Activated CD4-positive, alpha-beta T cell treated with anti-CD3 and anti-CD28 coated beads, Interleukin-2, amount 10 ng/mL, durations not matched to agents 24 days and 14 days (primary cell): ENCODE measurements at regions of chr2 and their contacts with region 1.

Region 1: DNA sequence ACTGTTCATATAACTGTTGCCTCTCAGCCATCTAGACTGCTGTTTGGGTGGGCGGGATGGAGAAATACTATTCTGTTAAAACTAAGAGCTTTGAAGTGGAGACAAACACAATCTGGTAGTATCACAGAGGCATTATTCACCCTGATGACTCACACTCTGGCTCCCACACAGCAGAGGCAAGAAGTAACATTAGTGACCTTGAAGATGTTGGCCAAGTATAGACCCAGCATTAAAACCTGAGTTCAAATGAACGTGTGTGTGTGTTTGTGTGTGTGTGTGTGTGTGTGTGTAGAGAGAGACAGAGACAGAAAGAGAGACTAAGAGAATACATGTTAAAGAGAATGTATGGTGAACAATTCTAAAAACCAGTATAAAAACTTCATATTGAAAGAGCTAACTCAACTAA is 22.5 kb upstream of the ACVR1 start:
- DNase-seq: peak; percentile 85
- H3K4me3 Mint-ChIP-seq: peak overlapping the region; percentile 82
- H3K27ac Mint-ChIP-seq: peak overlapping the region; percentile 99
- H3K4me1 Mint-ChIP-seq: peaks cover 75% of the 10 kb centered on the region
- H3K27me3 Mint-ChIP-seq: no peaks in the 10 kb centered on the region

Region 2: DNA sequence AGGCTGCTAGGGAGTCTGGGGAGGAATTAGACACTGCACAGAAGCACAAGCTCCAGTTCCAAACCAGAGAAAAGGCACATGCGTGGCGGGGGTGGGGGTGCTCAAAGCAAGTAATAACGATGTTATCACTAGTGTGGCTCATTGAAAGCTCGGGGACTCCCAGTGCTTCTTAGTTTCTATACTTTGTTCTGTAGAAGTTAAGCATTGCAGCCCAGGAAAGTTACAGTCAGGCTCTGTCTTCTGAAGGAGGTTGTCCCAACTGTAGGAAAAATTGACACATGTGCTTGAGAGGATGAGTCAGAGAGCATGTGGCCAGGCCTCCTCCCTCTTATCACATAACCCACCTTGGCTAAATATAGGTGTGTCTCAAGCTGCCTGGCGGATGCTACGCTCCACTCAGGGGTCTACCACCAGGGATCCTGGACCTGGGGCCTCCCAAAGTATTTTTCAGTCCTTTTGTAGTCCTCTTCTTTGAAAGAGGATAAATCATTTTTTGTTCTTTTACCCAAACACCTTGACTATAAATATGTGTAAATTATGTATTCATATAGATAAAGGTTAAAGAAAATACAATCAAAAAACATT is 637.3 kb before region 1 on chr2:
- intact Hi-C with region 1: loop called (anchors 1 kb)
- DNase-seq: peak; percentile 77
- H3K4me3 Mint-ChIP-seq: peak overlapping the region; percentile 61
- H3K27ac Mint-ChIP-seq: peak overlapping the region; percentile 89
- H3K4me1 Mint-ChIP-seq: peaks cover 34% of the 10 kb centered on the region
- H3K27me3 Mint-ChIP-seq: no peaks in the 10 kb centered on the region

Region 3: GRCh38 chr2:157443795-157444640 is 454.6 kb before region 1 on chr2 and contains the start of gene CYTIP:
- intact Hi-C with region 1: loop called (anchors 1 kb)
- DNase-seq: peak; percentile 93
- H3K4me3 Mint-ChIP-seq: peak within 1 kb of the TSS; percentile 92
- H3K27ac Mint-ChIP-seq: peak within 1 kb of the TSS; percentile 97
- H3K4me1 Mint-ChIP-seq: peaks cover 50% of the 10 kb centered on the region
- H3K27me3 Mint-ChIP-seq: no peaks in the 10 kb centered on the region
- total RNA-seq, gene CYTIP: 320 and 321 TPM in 2 replicates

Region 4: GRCh38 chr2:157628477-157629415 is 269.8 kb before region 1 on chr2 and contains the start of gene ACVR1C:
- intact Hi-C with region 1: loop called (anchors 1 kb)
- DNase-seq: peak; percentile 90
- H3K4me3 Mint-ChIP-seq: peak within 1 kb of the TSS; percentile 91
- H3K27ac Mint-ChIP-seq: peak within 1 kb of the TSS; percentile 66
- H3K4me1 Mint-ChIP-seq: peaks cover 24% of the 10 kb centered on the region
- H3K27me3 Mint-ChIP-seq: peaks cover 27% of the 10 kb centered on the region
- total RNA-seq, gene ACVR1C: 0.98 and 1.0 TPM in 2 replicates

Region 5: DNA sequence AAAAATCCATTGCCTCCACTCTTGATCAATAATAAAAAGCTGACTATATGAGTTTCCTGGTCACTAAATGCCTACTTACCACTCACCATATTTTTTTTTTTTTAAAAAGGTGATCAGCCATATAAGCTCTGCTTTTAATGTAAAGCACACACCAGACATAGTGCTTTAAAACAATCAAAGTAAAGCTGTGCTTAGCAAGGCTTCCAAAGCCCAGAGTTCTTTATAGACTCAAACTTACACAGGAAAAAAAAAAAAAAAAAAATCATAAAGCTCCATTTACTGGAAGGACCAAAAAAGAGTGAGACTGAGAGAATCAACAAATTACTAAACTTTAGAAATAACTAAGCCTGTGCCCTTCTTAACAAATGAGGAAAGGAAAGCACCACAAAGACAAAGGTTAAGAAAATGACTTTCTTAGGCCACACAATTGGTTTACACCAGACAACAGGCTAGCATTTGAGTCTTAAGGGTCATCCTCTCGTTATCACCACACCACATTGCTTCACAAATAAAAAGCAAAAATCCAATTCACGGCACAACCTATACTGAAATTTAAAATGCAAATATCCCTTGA is 33.6 kb before region 1 on chr2:
- intact Hi-C with region 1: loop called (anchors 1 kb)
- DNase-seq: no peak
- H3K4me3 Mint-ChIP-seq: peak overlapping the region; percentile 46
- H3K27ac Mint-ChIP-seq: peak overlapping the region; percentile 82
- H3K4me1 Mint-ChIP-seq: peaks cover 35% of the 10 kb centered on the region
- H3K27me3 Mint-ChIP-seq: no peaks in the 10 kb centered on the region

Region 6: DNA sequence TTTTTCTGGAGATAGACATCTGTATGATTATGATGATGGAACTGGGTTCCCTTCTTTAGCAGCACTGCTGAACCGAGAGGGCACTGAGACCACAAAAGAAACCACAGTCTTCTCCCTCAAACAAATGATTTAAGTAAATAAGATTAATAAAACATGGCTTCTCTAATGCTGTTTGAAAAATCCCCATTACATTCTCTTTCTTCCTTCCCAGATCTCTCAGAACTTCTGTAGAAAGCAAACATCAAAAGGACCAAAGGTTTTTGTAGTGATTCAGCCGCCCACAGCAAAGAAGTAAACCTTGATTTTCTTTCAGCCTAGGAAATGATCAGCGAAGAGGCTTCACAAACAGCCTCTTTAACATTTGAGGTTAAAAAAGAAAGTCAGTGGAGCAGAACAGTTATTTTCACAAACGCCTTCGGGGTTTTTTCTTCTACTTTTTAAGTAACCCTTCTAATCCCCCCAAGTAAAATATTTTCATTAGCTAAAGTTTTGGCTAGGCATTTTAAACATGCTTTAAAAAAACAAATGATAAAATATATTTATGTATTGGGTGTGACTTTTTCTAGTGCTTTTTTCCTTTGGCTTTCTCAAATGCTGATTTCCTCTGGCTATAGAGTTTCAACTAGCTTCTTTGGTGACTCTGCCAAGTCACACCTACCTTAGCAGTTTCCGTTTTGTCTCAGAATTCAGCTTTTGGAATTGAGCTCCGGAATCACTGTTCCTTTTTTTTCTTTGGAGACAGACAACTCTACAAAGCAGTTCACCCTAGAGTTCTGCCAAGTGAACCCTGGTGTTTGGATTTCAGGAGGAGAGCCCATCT is 292.7 kb after region 1 on chr2:
- intact Hi-C with region 1: loop called (anchors 10 kb)
- DNase-seq: peak; percentile 77
- H3K4me3 Mint-ChIP-seq: peak overlapping the region; percentile 58
- H3K27ac Mint-ChIP-seq: peak overlapping the region; percentile 71
- H3K4me1 Mint-ChIP-seq: peaks cover 16% of the 10 kb centered on the region
- H3K27me3 Mint-ChIP-seq: peaks cover 29% of the 10 kb centered on the region